ENCODE measurements at regions of chr13 and their contacts with region 1.

Region 1: DNA sequence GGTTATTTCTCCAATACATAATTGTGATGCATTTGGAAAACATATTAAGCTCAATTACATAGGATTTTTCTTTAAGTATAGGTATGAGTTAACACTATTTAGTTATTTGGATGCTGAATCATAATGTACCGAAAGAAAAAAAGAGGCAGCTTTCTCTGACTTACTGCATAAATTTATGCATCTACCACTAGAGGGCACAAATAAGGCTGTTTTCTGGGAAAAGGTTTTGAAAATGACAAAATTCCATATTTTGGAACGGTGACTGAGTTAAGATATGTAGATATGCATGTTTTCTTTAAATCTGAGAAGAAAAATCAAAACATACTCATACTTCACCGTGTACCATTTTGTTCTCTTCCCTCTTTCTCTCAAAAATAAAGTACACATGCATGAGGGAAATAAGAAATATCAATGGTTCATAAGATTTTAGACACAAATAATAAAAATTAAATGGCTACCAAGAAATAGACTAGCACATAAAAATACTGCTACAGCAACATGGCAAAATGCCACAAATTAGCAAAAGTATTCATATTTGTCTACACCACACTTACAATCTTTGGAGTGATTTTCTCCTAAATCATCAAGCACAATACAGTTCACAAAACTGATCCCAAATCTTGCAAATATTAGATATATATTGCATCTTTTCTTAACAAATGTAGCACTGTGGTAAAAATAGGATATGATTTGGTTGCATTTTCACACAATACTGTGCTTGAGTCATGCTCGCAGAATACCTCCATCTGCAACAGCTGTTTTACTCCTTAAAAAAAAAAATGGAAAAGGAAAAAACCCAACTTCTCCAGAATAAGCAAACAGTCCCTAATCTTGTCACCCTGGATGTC is 260.0 kb downstream of the FGF14 start:
- DNase-seq: no peak
- H3K4me3 ChIP-seq: no peak overlapping the region
- H3K27ac ChIP-seq: no peak overlapping the region
- H3K4me1 ChIP-seq: no peaks in the 10 kb centered on the region
- H3K27me3 ChIP-seq: no peaks in the 10 kb centered on the region
- CTCF ChIP-seq: peak in 2 of 3 experiments; percentile 23 to 61; a peak in 2 of 4 replicates
- EP300 ChIP-seq: no peak
- POLR2A ChIP-seq: no peak
- RAD21 ChIP-seq: peak; percentile 38 to 50

Region 2: GRCh38 chr13:102131246-102131645 is 10.6 kb before region 1 on chr13:
- CTCF ChIA-PET with region 1: interaction called, 11 read pairs
- POLR2A ChIA-PET with region 1: no interaction called
- DNase-seq: no peak
- H3K4me3 ChIP-seq: no peak overlapping the region
- H3K27ac ChIP-seq: no peak overlapping the region
- H3K4me1 ChIP-seq: no peaks in the 10 kb centered on the region
- H3K27me3 ChIP-seq: no peaks in the 10 kb centered on the region
- CTCF ChIP-seq: no peak
- EP300 ChIP-seq: no peak
- POLR2A ChIP-seq: no peak
- RAD21 ChIP-seq: no peak

Region 3: GRCh38 chr13:102152790-102153189 is 10.9 kb after region 1 on chr13:
- CTCF ChIA-PET with region 1: interaction called, 12 read pairs
- POLR2A ChIA-PET with region 1: no interaction called
- DNase-seq: no peak
- H3K4me3 ChIP-seq: no peak overlapping the region
- H3K27ac ChIP-seq: no peak overlapping the region
- H3K4me1 ChIP-seq: no peaks in the 10 kb centered on the region
- H3K27me3 ChIP-seq: no peaks in the 10 kb centered on the region
- CTCF ChIP-seq: no peak
- EP300 ChIP-seq: no peak
- POLR2A ChIP-seq: no peak
- RAD21 ChIP-seq: no peak

Measured in H1 (cell line).